ENCODE measurements at regions of chr6 and their contacts with region 1.

Region 1: DNA sequence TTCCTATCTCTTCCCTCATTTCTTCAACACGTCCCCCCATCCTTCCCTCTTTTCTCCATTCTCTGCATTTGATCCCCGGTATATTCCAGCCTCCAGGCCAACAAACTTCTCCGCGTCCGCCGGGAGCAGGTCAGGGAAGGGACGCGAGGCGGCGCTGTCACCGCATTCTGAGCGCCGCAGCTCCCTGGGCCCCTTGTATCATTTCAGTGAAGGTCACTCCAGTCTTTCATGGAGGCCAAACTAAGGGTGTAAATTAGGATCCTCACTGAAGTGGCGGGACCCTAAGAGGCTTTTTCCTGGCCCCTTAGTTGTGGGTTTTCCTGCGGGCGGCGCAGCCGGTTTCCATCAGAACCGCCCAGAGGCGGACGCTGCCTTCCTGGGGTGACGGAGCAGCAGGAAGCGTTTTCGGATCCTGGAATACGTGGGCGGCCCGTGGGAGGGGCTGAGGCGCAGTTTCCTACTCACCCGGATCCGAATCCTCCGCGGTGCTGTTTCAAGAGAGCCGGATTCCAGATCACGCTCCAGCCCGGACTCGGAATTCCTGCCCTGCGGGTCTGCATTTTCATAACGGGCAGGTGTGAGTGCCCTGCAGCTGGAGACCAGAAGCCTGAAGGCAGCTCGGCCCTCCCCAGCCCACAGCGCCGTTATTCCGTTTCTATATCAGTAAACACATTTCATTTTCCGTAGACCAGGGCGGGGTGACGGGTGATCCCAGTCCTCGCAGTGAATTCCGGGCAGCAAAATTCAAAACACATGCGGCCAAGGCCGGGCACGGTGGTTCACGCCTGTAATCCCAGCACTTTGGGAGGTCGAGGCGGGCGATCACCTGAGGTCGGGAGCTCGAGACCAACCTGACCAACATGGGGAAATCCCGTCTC is 3.6 kb upstream of the MICA start:
- DNase-seq: peak; percentile 95
- ATAC-seq: peak; percentile 87

Region 2: DNA sequence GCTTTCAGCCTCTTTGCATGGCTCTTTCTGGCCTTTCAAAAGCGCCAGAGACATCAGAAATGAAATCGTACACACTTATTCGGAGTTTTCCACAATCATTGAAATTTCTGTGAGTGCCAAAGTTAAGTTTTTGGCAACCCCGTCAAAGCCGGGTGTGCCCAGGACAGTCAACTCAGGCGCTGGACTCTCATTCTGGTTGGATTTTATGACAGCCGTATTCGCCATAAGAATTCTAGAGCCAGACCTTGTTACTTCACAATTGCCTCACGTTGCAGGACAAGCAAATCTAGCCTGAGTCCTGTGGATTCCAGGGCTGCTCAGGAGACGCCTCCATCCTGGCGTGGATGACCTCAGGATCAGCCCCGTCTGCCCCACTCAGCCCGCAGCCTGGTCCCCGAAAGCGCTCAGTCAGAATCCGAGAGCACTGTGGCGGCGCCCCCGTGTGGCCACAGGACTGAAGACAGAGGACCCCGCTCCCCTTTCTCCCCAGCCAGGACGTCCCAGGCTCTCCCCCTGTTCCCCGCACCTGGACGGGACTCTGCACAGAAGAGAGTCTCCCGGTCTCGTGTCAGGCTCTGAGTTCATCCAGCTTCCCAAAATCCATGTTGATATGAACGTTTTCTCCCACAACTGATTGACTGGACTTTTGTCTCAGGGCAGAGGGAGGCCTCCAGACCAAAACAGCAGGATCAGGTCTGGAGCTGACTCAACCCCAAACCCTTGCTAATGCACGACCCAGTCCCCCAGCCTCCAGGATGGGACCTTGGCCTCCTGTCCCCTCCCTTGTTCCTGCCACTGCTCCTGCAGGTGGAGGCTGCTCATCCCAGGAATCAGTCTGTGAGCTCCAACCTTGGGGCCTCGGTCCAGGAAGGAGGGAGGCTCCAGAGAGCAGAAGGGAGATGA is 41.8 kb after region 1 on chr6:
- intact Hi-C with region 1: loop called (anchors 1 kb)
- DNase-seq: peak; percentile 96
- ATAC-seq: peak; percentile 96

Measured in Right ventricle myocardium inferior (tissue), 1 donor.